Common myeloid progenitor, CD34-positive (primary cell): ENCODE measurements at regions of chr15 and their contacts with region 1.

Region 1: DNA sequence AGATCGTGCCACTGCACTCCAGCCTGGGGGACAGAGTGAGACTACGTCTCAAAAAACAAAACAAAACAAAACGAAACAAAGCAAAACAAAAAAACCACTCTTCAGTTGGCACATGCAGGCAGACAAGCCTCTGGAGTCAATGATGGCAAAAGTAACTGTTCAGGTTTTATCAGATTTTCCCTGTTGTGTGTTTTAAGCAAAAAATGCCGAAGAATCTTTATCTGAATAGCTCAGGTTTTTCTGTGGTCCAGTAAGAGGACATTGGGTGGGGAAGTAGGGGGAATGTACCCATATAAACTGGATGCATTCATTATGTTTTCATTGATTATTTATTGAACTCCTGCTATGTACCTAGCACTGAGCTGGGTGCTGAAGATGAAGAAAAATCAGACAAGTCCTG is 20.8 kb upstream of the BCL2A1 start:
- DNase-seq: peak in 1 of 3 donors; percentile 49
- H3K4me3 ChIP-seq: no peak overlapping the region
- H3K27ac ChIP-seq: no peak overlapping the region
- H3K4me1 ChIP-seq: no peaks in the 10 kb centered on the region
- H3K27me3 ChIP-seq: no peaks in the 10 kb centered on the region

Region 2: DNA sequence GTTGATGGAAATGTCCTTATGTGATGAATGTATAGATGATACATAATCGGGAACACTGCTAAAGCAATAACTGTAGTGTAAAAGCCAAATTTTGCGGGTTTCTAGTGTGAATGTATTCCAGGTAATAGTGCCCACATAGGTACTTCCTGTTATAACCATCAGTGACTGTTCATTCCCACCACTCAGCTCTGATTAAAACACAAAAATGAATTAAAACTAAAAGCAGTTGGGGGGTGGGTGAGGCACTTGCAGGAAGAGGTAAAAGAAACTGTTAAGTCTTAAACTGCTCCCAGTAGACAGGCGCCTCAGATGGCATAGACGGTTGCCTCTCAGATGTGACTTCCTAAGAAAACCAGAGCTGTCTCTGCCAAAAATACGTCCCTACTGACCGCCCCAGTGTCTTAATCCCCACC is 94.1 kb before region 1 on chr15:
- CTCF ChIA-PET with region 1: interaction called, 10 read pairs
- POLR2A ChIA-PET with region 1: no interaction called
- DNase-seq: peak in 2 of 3 donors; percentile 37 to 46
- H3K4me3 ChIP-seq: peak overlapping the region in 6 of 7 experiments; percentile 82 to 95 (median 88)
- H3K27ac ChIP-seq: no peak overlapping the region
- H3K4me1 ChIP-seq: peaks cover 14 to 32% (median 23%) of the 10 kb centered on the region in 4 experiments
- H3K27me3 ChIP-seq: no peaks in the 10 kb centered on the region